Stomach (tissue), 19 donors: ENCODE measurements at regions of chr4 and their contacts with region 1.

Region 1: DNA sequence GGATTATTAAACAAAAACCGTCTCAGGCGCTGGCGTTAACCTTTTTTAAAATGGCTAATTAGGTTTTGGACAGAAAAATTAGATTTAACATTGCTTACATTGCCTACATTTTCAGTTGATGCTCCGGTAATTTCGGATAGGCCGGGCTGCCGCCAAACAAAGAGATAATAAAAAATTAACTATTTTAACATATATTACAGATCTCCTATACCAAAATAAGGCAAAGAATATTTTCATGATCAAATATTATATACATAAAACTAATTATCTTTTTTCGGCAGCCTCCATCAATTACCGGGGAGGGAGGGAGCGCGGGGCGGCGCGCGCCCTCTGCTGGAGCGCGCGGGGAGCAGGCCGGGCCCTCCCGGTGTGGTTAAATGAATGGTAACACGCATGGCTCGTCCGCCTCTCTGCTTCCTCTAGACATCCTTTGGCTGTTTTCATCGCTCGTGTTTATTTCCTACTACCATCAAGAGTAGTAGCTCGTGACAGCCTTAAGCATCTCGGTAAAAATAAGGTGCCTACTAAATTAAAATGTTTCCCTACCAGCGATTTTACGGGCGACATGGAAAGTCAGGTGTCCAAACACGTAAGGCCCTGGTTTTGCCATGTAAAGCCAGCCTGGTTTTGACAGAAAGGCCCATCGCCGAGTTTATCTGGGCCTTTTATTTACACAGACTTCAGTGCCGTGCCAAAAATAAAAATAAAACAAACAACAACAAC is 52.4 kb upstream of the TMEM33 start:
- DNase-seq: peak; percentile 42 to 78
- H3K4me3 ChIP-seq: peak overlapping the region; percentile 34 to 53 (median 43)
- H3K27ac ChIP-seq: no peak overlapping the region
- H3K4me1 ChIP-seq: peaks cover 22 to 48% (median 38%) of the 10 kb centered on the region in 4 donors
- H3K27me3 ChIP-seq: peaks cover 31 to 98% (median 51%) of the 10 kb centered on the region in 3 donors
- CTCF ChIP-seq: peak in 5 of 7 experiments; percentile 16 to 95 (median 88)
- EP300 ChIP-seq: no peak
- POLR2A ChIP-seq: no peak

Region 2: DNA sequence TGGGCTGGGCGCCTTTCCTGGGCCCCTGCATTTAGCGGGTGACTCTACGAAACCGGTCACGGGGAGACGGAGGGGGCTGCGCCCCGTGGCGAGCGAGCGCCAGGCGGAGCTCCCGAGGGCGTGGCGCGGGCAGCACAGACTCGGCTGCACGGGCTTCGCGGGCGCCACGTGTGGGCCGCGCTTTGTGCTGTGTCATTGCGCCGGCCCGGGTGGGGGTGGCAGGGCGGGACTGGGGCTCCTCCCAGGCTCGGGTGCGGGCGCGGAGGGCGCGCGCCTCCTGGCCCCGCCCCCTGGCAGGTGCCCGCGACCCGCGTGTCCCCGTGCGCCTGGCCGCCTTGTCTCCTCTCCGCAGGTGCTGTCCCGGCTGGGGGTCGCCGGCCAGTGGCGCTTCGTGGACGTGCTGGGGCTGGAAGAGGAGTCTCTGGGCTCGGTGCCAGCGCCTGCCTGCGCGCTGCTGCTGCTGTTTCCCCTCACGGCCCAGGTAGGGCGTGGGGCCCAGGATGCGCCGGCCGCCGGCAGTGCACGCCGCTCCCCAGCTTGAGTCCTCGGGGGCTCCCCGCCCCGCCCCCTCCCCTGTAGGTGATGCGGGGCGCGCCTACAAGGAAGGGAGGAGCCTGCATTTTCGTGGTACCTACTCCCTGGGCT is 625.4 kb before region 1 on chr4:
- intact Hi-C with region 1: loop called (anchors 10 kb)
- DNase-seq: peak; percentile 62 to 83
- H3K4me3 ChIP-seq: peak overlapping the region; percentile 46 to 72 (median 54)
- H3K27ac ChIP-seq: no peak overlapping the region
- H3K4me1 ChIP-seq: peaks cover 9 to 20% (median 17%) of the 10 kb centered on the region in 4 donors
- H3K27me3 ChIP-seq: peaks cover 0 to 51% (median 19%) of the 10 kb centered on the region in 3 donors
- CTCF ChIP-seq: no peak
- EP300 ChIP-seq: no peak
- POLR2A ChIP-seq: no peak

Region 3: GRCh38 chr4:41692717-41693345 is 190.0 kb before region 1 on chr4:
- intact Hi-C with region 1: loop called (anchors 10 kb)
- DNase-seq: peak; percentile 56 to 89
- H3K4me3 ChIP-seq: no peak overlapping the region
- H3K27ac ChIP-seq: no peak overlapping the region
- H3K4me1 ChIP-seq: no peaks in the 10 kb centered on the region
- H3K27me3 ChIP-seq: no peaks in the 10 kb centered on the region
- CTCF ChIP-seq: peak in 5 of 7 experiments; percentile 65 to 85 (median 71)
- EP300 ChIP-seq: no peak
- POLR2A ChIP-seq: no peak

Region 4: GRCh38 chr4:42234817-42235216 is 352.0 kb after region 1 on chr4:
- intact Hi-C with region 1: no loop called
- DNase-seq: no peak
- H3K4me3 ChIP-seq: no peak overlapping the region
- H3K27ac ChIP-seq: no peak overlapping the region
- H3K4me1 ChIP-seq: no peaks in the 10 kb centered on the region
- H3K27me3 ChIP-seq: no peaks in the 10 kb centered on the region
- CTCF ChIP-seq: no peak
- EP300 ChIP-seq: no peak
- POLR2A ChIP-seq: no peak